Endothelial cell of umbilical vein (primary cell): ENCODE measurements at regions of chr16 and their contacts with region 1.

Region 1: DNA sequence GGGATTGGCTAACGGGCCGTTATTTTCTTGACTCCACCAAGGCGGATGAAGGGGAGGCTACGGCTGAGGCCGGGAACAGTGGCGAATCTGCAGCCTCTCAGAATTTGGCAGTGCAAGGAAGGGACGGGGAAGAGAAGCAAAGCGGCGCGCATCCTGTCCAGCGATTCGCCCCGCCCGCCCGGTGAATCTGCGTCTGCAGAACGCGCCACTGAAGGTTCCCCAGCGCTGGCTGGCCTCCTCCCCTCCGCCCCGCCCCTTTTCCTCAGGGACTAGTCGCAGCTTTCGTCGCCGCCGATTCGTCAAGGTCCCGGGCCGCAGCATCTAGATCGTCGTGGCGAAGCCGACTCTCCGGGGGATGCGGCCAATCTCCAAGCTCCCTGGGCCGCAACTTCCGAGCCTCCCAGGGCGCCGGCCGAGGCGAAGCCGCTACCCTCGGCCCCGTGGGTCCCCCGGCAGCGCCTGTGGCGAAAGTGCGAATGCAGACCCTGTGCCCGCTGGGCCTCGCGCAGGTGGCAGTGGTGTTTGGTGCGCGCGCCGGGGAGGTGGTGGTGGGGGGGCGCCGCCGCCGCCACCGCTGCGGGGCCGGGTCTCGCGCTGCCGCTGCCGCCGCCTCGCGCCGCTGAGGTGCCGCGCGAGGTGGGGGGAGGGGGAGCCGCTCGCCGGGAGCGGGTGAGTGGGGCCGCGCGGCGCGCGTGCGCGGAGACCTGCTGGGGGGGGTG is at the start of gene SETD1A:
- DNase-seq: peak; percentile 90
- H3K4me3 ChIP-seq: peak within 1 kb of the TSS; percentile 60 to 71 (median 67)
- H3K27ac ChIP-seq: peak within 1 kb of the TSS; percentile 100
- H3K4me1 ChIP-seq: peaks cover 12% of the 10 kb centered on the region
- H3K27me3 ChIP-seq: no peaks in the 10 kb centered on the region
- CTCF ChIP-seq: no peak
- POLR2A ChIP-seq: no peak
- total RNA-seq, gene SETD1A: 21.3 and 25.6 TPM in 2 replicates

Region 2: GRCh38 chr16:30609926-30610839 is 347.4 kb before region 1 on chr16 and contains the start of gene ZNF689:
- CTCF ChIA-PET with region 1: no interaction called
- POLR2A ChIA-PET with region 1: no interaction called
- dilution Hi-C with region 1: no loop called
- intact Hi-C with region 1: no loop called
- DNase-seq: peak; percentile 98
- H3K4me3 ChIP-seq: peak within 1 kb of the TSS; percentile 29 to 77 (median 70)
- H3K27ac ChIP-seq: peak within 1 kb of the TSS; percentile 79
- H3K4me1 ChIP-seq: peaks cover 4% of the 10 kb centered on the region
- H3K27me3 ChIP-seq: no peaks in the 10 kb centered on the region
- CTCF ChIP-seq: no peak
- POLR2A ChIP-seq: peak; percentile 74
- total RNA-seq, gene ZNF689: 6.8 and 8.4 TPM in 2 replicates

Region 3: DNA sequence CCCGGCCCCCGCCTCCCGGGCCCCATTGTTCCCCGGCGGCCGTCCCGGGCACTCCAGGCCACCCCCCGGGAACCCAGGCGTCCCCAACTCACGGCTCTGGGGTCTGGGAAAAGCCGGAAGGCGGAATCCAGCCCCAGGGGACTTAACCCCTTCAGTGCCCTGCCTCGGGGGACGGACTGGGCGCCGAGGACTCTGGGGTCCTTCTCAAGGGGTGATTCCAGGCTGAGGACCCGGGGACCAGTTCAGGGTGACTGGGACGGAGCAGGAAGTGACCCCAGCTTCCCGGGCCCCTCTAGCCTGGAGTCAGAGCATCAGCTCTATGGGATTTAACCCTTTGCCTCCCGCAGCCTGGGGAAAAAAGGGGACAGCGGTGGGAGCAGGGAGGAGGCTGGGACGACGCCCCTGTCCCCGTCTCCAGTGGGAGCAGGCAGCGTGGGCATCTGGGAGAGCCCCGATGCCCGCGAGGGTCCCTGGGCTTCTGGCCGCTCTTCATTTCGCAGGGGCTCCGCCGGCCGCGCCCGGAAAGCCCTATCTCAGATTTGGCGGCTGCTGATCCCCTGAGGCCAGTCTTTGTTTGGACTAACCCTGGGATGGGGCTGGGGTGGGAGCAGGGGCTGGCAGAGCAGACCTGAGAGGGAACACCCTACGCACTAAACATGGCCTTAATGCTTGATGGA is 170.5 kb before region 1 on chr16 and contains the start of gene ZNF629:
- CTCF ChIA-PET with region 1: no interaction called
- POLR2A ChIA-PET with region 1: no interaction called
- dilution Hi-C with region 1: no loop called
- intact Hi-C with region 1: no loop called
- DNase-seq: peak; percentile 45
- H3K4me3 ChIP-seq: peak within 1 kb of the TSS; percentile 70 to 91 (median 91)
- H3K27ac ChIP-seq: peak within 1 kb of the TSS; percentile 89
- H3K4me1 ChIP-seq: peaks cover 14% of the 10 kb centered on the region
- H3K27me3 ChIP-seq: no peaks in the 10 kb centered on the region
- CTCF ChIP-seq: no peak
- POLR2A ChIP-seq: no peak
- total RNA-seq, gene ZNF629: 11.2 and 11.7 TPM in 2 replicates

Region 4: GRCh38 chr16:30941600-30942425 is 15.8 kb before region 1 on chr16:
- CTCF ChIA-PET with region 1: interaction called, 11 read pairs
- POLR2A ChIA-PET with region 1: interaction called, 3 read pairs
- dilution Hi-C with region 1: no loop called
- intact Hi-C with region 1: no loop called
- DNase-seq: peak; percentile 75
- H3K4me3 ChIP-seq: no peak overlapping the region
- H3K27ac ChIP-seq: no peak overlapping the region
- H3K4me1 ChIP-seq: peaks cover 2% of the 10 kb centered on the region
- H3K27me3 ChIP-seq: no peaks in the 10 kb centered on the region
- CTCF ChIP-seq: peak; percentile 90 to 96
- POLR2A ChIP-seq: no peak

Region 5: GRCh38 chr16:31032736-31033708 is 75.4 kb after region 1 on chr16 and contains the start of gene STX4:
- CTCF ChIA-PET with region 1: no interaction called
- POLR2A ChIA-PET with region 1: no interaction called
- dilution Hi-C with region 1: no loop called
- intact Hi-C with region 1: loop called (anchors 1 kb)
- DNase-seq: peak; percentile 94
- H3K4me3 ChIP-seq: peak within 1 kb of the TSS; percentile 63 to 75 (median 71)
- H3K27ac ChIP-seq: peak within 1 kb of the TSS; percentile 85
- H3K4me1 ChIP-seq: peaks cover 11% of the 10 kb centered on the region
- H3K27me3 ChIP-seq: no peaks in the 10 kb centered on the region
- CTCF ChIP-seq: no peak
- POLR2A ChIP-seq: no peak
- total RNA-seq, gene STX4: 60.7 and 65.2 TPM in 2 replicates

Region 6: GRCh38 chr16:31094424-31095120 is 137.0 kb after region 1 on chr16 and contains the start of gene VKORC1:
- CTCF ChIA-PET with region 1: interaction called, 11 read pairs
- POLR2A ChIA-PET with region 1: no interaction called
- dilution Hi-C with region 1: no loop called
- intact Hi-C with region 1: loop called (anchors 1 kb)
- DNase-seq: peak; percentile 97
- H3K4me3 ChIP-seq: peak within 1 kb of the TSS; percentile 28 to 91 (median 62)
- H3K27ac ChIP-seq: peak within 1 kb of the TSS; percentile 6
- H3K4me1 ChIP-seq: peaks cover 3% of the 10 kb centered on the region
- H3K27me3 ChIP-seq: no peaks in the 10 kb centered on the region
- CTCF ChIP-seq: no peak
- POLR2A ChIP-seq: peak; percentile 64
- total RNA-seq, gene VKORC1: 91.8 and 93.5 TPM in 2 replicates

Region 7: GRCh38 chr16:31179747-31180459 is 222.3 kb after region 1 on chr16 and contains the start of gene FUS:
- CTCF ChIA-PET with region 1: interaction called, 3 read pairs
- POLR2A ChIA-PET with region 1: interaction called, 4 read pairs
- dilution Hi-C with region 1: no loop called
- intact Hi-C with region 1: loop called (anchors 1 kb)
- DNase-seq: peak; percentile 90
- H3K4me3 ChIP-seq: peak within 1 kb of the TSS; percentile 77 to 100 (median 95)
- H3K27ac ChIP-seq: peak within 1 kb of the TSS; percentile 91
- H3K4me1 ChIP-seq: peaks cover 22% of the 10 kb centered on the region
- H3K27me3 ChIP-seq: no peaks in the 10 kb centered on the region
- CTCF ChIP-seq: no peak
- POLR2A ChIP-seq: peak; percentile 100
- total RNA-seq, gene FUS: 569 and 574 TPM in 2 replicates